ENCODE measurements at regions of chrX and their contacts with region 1.

Region 1: DNA sequence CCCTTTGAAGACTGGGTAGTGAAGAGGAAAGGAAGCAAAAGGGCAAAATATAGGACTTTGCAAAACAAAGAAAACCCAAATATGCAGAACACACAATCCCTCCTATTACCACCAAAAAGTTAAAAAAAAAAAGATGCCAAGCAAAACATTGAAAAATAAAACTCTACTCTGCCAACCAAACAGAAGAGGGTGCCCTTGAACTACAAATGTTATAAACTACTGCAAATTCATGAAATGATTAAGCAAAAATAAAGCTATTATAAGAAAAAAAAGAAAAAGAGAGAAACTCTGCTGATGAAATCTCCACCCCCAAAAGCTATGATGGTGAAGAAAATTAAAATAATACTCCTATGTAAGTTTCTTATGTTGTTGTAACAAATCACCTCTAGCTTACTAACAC is 168.5 kb upstream of the STK26 start:
- DNase-seq: no peak
- H3K4me3 ChIP-seq: no peak overlapping the region
- H3K27ac ChIP-seq: no peak overlapping the region
- H3K4me1 ChIP-seq: no peaks in the 10 kb centered on the region
- H3K27me3 ChIP-seq: no peaks in the 10 kb centered on the region
- CTCF ChIP-seq: peak; percentile 76

Region 2: GRCh38 chrX:130654409-130654950 is 1200.1 kb before region 1 on chrX:
- CTCF ChIA-PET with region 1: no interaction called
- POLR2A ChIA-PET with region 1: no interaction called
- intact Hi-C with region 1: no loop called
- DNase-seq: no peak
- H3K4me3 ChIP-seq: no peak overlapping the region
- H3K27ac ChIP-seq: no peak overlapping the region
- H3K4me1 ChIP-seq: no peaks in the 10 kb centered on the region
- H3K27me3 ChIP-seq: no peaks in the 10 kb centered on the region
- CTCF ChIP-seq: no peak

Region 3: DNA sequence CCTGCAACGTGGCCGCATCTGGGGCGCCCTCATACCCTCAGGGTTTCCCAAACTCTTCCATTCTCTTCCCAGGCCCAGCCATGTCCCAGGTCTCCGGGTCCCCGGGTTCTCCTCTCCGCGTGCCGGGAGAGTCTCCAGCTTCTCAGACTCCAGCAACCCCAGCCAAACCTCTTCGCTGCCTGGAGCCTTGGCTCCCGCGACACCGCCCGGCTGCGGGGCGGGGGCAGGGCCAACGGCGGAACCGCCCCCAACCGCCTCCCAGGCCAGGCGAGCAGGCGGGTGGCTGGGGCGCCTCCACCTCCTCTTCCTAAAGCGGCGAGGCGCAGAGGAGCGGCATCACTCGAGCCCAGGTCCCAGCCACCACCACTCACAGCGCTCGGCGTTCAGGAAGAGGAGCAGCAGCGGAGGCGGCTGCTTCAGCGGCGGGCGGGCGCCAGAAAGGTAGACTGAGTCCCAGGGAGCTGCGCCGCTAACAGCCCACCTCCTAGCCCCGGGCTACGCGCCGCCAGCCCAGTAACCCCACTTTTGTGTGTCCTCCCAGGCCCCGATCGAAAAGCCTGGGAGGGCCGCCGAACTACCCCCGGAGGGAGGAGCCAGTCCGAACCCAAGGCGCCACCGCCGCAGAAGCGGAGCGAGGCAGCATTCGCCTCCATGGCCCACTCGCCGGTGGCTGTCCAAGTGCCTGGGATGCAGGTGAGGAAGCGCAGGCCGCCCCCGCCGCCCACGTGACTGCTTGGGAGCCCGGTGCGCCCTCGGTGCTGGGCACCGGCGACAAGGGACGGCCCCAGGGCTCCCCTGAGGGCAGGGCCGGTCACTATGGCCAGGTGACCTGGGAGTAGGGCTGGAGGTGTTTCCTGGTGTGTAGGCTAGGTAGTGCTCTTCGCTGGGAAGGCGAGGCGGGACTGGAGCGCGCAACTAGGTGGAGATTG is 168.7 kb after region 1 on chrX and contains the start of gene STK26:
- CTCF ChIA-PET with region 1: no interaction called
- POLR2A ChIA-PET with region 1: no interaction called
- intact Hi-C with region 1: loop called (anchors 1 kb)
- DNase-seq: peak; percentile 76 to 92
- H3K4me3 ChIP-seq: peak within 1 kb of the TSS; percentile 91
- H3K27ac ChIP-seq: peak within 1 kb of the TSS; percentile 85
- H3K4me1 ChIP-seq: peaks cover 35% of the 10 kb centered on the region
- H3K27me3 ChIP-seq: no peaks in the 10 kb centered on the region
- CTCF ChIP-seq: no peak
- total RNA-seq, gene STK26: 41.1 and 48.4 TPM in 2 replicates

Region 4: GRCh38 chrX:132071260-132071659 is 216.7 kb after region 1 on chrX:
- CTCF ChIA-PET with region 1: interaction called, 9 read pairs
- POLR2A ChIA-PET with region 1: no interaction called
- intact Hi-C with region 1: loop called (anchors 1 kb)
- DNase-seq: peak in 1 of 2 experiments; percentile 38
- H3K4me3 ChIP-seq: no peak overlapping the region
- H3K27ac ChIP-seq: no peak overlapping the region
- H3K4me1 ChIP-seq: no peaks in the 10 kb centered on the region; the same call in 1 of the 2 replicates
- H3K27me3 ChIP-seq: no peaks in the 10 kb centered on the region
- CTCF ChIP-seq: peak; percentile 72